Gastrocnemius medialis (tissue), 4 donors: ENCODE measurements at regions of chr9 and their contacts with region 1.

Region 1: GRCh38 chr9:69421908-69422801 is 97.1 kb downstream of the ENTREP1 start:
- DNase-seq: peak; percentile 32 to 47
- ATAC-seq: peak; percentile 89
- H3K4me3 ChIP-seq: no peak overlapping the region
- H3K27ac ChIP-seq: no peak overlapping the region
- H3K4me1 ChIP-seq: no peaks in the 10 kb centered on the region
- H3K27me3 ChIP-seq: no peaks in the 10 kb centered on the region
- CTCF ChIP-seq: peak; percentile 75 to 87 (median 83)
- POLR2A ChIP-seq: no peak

Region 2: GRCh38 chr9:69549310-69550202 is 127.4 kb after region 1 on chr9:
- in situ Hi-C with region 1: loop called (anchors 5 to 10 kb)
- intact Hi-C with region 1: loop called (anchors 2 kb)
- DNase-seq: no peak
- ATAC-seq: peak; percentile 62 to 64
- H3K4me3 ChIP-seq: no peak overlapping the region
- H3K27ac ChIP-seq: no peak overlapping the region
- H3K4me1 ChIP-seq: peaks cover 1 to 7% of the 10 kb centered on the region in 2 donors
- H3K27me3 ChIP-seq: no peaks in the 10 kb centered on the region
- CTCF ChIP-seq: peak; percentile 72 to 89 (median 79)
- POLR2A ChIP-seq: no peak

Region 3: DNA sequence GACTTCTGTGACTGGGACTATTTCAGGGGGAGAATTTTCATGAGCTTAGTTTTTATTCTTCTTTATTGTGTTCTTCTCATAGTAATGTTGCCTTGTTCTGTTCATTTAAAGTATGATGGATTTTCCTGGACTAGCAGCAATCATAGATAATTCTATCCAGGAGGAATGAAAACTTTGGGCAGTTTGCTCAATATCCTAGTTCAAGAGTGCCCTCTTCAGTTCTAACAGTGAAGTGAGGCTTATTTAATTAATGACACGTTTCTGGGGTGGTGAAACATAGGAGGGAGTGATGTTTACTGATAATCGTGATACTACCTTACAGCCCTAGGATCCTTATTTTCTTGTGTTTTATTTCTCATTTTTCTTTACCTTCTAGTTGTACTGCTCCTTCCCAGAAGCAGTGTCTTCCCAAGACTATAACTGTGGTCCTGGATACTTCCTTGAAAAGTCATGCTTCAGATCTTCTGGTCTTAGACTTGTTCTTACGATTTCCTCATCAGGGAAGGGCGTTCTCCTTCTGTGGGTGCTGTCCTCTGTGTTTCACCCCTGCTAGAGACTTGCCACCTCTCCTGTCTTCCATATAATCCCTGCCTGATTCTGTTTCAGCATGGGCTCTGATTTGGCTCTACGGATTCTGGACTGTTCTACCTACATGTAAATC is 455.8 kb after region 1 on chr9:
- in situ Hi-C with region 1: loop called in 3 of 4 experiments (anchors 10 to 25 kb)
- intact Hi-C with region 1: loop called (anchors 5 kb)
- DNase-seq: no peak
- ATAC-seq: peak in 1 of 2 donors; percentile 72
- H3K4me3 ChIP-seq: no peak overlapping the region
- H3K27ac ChIP-seq: no peak overlapping the region
- H3K4me1 ChIP-seq: peaks cover 20% of the 10 kb centered on the region in 2 donors
- H3K27me3 ChIP-seq: no peaks in the 10 kb centered on the region
- CTCF ChIP-seq: peak in 4 of 5 experiments; percentile 37 to 56 (median 44)
- POLR2A ChIP-seq: no peak

Region 4: DNA sequence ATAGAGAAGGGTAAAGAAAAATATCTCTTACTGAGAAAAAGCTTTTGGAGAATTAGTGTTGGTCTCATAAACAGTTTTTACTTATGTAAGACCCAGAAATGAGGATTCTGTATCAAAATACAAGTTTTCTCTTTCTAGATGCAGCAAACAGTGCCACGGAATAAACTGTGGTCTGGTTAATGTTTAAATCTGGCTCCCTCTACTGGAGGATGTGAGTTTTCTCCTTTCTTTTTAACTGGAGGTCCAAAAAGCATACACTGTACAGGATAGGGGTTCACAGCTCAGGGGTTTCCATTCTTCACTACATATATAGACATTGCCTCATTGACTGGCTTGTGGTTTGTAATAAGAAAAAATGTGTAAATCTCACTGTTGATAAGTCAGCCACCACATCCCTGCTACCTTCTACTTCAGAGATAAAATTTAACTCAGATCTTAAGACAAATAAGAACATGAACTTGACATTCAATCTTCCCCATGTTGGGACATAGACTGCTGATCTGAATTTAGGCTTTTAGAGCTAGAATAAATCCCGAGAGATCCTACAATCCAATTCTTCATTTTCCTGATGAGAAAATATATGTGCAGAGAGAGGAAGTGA is 497.4 kb after region 1 on chr9:
- in situ Hi-C with region 1: loop called in 1 of 4 experiments (anchors 10 kb)
- intact Hi-C with region 1: loop called (anchors 10 kb)
- DNase-seq: no peak
- ATAC-seq: peak in 1 of 2 donors; percentile 75
- H3K4me3 ChIP-seq: no peak overlapping the region
- H3K27ac ChIP-seq: no peak overlapping the region
- H3K4me1 ChIP-seq: no peaks in the 10 kb centered on the region
- H3K27me3 ChIP-seq: no peaks in the 10 kb centered on the region
- CTCF ChIP-seq: peak; percentile 26 to 68 (median 42)
- POLR2A ChIP-seq: no peak